ENCODE measurements at regions of chr13 and their contacts with region 1.

Region 1: GRCh38 chr13:32334671-32335070 is 19.4 kb downstream of the BRCA2 start:
- DNase-seq: no peak
- CTCF ChIP-seq: no peak

Region 2: GRCh38 chr13:32323912-32324311 is 10.8 kb before region 1 on chr13:
- CTCF ChIA-PET with region 1: interaction called, 17 read pairs
- POLR2A ChIA-PET with region 1: no interaction called
- DNase-seq: no peak
- CTCF ChIP-seq: no peak

Measured in GM10248 (cell line).